K562 (cell line): ENCODE measurements at regions of chr9 and their contacts with region 1.

Region 1: DNA sequence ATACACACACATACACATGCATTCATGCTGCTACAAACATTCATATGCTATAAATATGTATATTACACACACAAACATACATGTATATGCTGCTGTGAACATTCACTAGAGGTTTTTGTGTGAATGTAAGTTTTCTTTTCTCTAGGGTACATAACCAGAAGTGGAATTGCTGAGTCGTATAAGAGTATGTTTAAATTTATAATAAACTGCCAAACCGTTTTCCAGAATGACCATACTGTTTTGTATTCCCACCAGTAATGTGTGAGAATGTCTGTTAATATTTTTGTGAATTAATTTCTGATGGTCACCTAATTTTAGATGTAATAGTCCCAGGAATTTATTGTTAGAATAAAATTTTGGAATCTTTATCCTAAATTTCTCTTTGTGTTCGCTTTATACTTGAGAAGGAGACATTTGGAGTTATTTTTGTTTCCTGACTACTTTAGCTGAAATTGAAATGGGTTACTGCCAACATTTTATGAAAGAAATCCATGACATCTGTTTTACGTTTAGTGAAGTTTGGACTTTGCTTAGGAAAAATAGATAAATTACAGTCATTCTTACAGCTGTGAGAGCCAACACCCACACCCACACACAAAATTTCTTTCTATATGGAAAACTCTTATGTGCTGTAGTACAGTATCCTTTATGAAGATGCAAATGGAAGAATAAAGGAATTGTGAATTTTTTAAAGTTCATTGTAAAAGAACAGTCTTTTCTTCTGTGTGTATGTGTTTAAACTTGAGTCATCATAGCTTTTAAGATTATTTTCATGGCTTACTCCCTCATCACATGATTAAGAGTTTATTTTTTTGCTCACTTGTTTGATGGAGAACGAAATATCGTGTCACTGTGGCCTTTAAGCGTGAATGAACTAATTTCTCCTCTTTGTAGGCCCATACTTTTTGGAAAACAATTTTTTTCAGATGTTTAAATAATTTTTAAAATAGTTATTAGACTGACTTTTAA is 24.3 kb downstream of the CENPP start:
- DNase-seq: no peak
- ATAC-seq: no peak
- H3K4me3 ChIP-seq: no peak overlapping the region
- H3K27ac ChIP-seq: no peak overlapping the region
- H3K4me1 ChIP-seq: no peaks in the 10 kb centered on the region
- H3K27me3 ChIP-seq: no peaks in the 10 kb centered on the region
- CTCF ChIP-seq: no peak
- EP300 ChIP-seq: no peak
- POLR2A ChIP-seq: no peak
- RAD21 ChIP-seq: no peak

Region 2: DNA sequence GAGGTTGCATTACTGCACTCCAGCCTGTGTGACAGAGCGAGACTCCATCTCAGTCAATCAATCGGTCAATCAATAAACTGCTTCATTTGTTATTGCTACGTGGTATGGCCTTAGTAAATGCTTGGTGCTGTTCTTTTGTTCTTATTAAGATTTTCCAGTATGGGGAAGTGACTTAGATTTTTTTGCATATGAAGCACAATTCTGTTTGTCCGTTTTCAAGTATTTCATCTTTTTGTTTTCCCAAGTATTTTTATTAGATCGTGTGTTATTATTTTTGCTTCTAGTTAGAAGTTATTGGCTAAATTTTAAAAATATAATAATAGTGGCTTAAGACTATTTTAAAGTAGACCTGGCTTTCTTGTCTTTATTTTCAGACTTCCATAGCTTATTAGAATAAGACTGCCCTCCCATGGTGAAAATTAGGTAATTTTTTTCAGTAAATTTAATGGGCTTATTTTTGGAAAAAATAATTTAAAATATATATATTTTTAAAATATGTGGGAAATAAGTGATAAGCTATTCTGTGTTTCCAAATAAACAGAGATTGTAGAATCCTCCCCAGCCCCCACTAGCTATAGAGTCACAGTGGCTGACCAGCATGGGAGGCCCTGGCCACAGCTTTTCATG is 89.0 kb after region 1 on chr9:
- CTCF ChIA-PET with region 1: no interaction called
- POLR2A ChIA-PET with region 1: no interaction called
- in situ Hi-C with region 1: no loop called
- intact Hi-C with region 1: loop called (anchors 10 kb)
- DNase-seq: no peak
- ATAC-seq: no peak
- H3K4me3 ChIP-seq: no peak overlapping the region
- H3K27ac ChIP-seq: no peak overlapping the region
- H3K4me1 ChIP-seq: no peaks in the 10 kb centered on the region
- H3K27me3 ChIP-seq: no peaks in the 10 kb centered on the region
- CTCF ChIP-seq: peak in 2 of 3 experiments; percentile 9 to 53; a peak in 3 of 6 replicates
- EP300 ChIP-seq: no peak
- POLR2A ChIP-seq: no peak
- RAD21 ChIP-seq: peak; percentile 41 to 51